Mammary epithelial cell (primary cell): ENCODE measurements at regions of chr14 and their contacts with region 1.

Region 1: GRCh38 chr14:35416108-35416750 is 11.7 kb upstream of the NFKBIA start:
- DNase-seq: no peak
- H3K4me3 ChIP-seq: no peak overlapping the region
- H3K27ac ChIP-seq: no peak overlapping the region
- H3K4me1 ChIP-seq: peaks cover 11% of the 10 kb centered on the region
- H3K27me3 ChIP-seq: no peaks in the 10 kb centered on the region
- CTCF ChIP-seq: no peak

Region 2: DNA sequence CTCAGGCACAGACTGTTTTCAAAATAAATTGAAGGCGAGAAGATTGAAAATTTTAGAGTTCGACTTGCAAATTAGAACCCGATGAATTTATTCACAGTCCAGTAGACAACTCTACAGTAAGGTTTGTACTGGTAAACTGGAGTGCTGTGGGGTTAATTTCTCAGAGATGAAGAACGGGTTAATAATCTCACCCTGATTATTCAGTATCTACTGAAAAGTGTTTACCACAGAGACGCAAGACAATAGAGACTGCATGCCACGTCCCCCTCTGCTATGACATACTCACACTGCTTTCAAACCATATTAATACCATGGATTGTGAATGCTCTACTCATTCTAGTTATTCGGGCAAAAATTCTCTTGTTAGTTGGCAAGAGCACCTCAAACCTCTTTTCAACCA is 737.9 kb before region 1 on chr14:
- CTCF ChIA-PET with region 1: no interaction called
- dilution Hi-C with region 1: no loop called
- in situ Hi-C with region 1: loop called in 1 of 2 experiments (anchors 25 kb)
- intact Hi-C with region 1: loop called (anchors 2 kb)
- DNase-seq: peak; percentile 42
- H3K4me3 ChIP-seq: no peak overlapping the region
- H3K27ac ChIP-seq: peak overlapping the region; percentile 80
- H3K4me1 ChIP-seq: peaks cover 14% of the 10 kb centered on the region
- H3K27me3 ChIP-seq: no peaks in the 10 kb centered on the region
- CTCF ChIP-seq: no peak

Region 3: DNA sequence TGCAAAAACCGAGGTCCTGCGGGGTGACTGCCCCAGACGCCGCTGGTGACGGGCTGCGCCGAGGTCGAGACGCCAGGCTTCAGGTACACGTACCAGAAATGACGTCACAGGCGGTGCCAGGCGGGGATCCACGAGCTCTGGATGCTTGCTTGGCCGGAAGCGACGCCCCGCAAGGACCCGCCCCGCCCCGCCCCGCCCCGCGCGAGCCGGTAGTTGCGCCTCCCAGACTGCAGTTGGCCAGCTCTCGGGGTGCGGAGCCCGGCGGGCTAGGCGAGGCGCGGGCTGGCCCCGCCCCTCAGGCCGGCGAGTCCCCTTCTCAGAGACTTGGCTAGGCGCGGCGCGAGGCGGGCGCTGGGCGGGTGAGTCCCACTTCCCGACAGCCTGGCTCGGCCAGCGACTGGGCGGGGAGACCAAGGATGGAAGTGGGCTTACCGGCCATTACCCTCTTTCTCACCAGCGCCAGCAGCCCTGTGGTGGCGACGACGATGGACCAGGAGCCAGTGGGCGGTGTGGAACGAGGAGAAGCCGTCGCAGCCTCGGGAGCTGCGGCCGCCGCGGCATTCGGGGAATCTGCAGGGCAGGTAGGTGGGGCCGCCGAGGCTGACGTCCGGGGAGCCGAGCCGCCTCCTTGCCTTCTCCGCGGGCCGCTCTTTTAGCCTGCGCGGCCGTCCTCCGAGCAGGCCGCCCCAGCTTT is 370.0 kb before region 1 on chr14 and contains the start of gene FAM177A1:
- CTCF ChIA-PET with region 1: no interaction called
- dilution Hi-C with region 1: no loop called
- in situ Hi-C with region 1: no loop called
- intact Hi-C with region 1: loop called (anchors 5 kb)
- DNase-seq: peak; percentile 98
- H3K4me3 ChIP-seq: peak within 1 kb of the TSS; percentile 88 to 98 (median 91)
- H3K27ac ChIP-seq: peak within 1 kb of the TSS; percentile 97
- H3K4me1 ChIP-seq: peaks cover 11% of the 10 kb centered on the region
- H3K27me3 ChIP-seq: no peaks in the 10 kb centered on the region
- CTCF ChIP-seq: no peak
- total RNA-seq, gene FAM177A1: 30.2 to 84.2 TPM

Region 4: GRCh38 chr14:35121887-35122695 is 294.1 kb before region 1 on chr14 and contains the starts of genes PPP2R3C and PRORP:
- CTCF ChIA-PET with region 1: no interaction called
- dilution Hi-C with region 1: no loop called
- in situ Hi-C with region 1: loop called in 1 of 2 experiments (anchors 10 kb)
- intact Hi-C with region 1: no loop called
- DNase-seq: peak; percentile 99
- H3K4me3 ChIP-seq: peak within 1 kb of the TSS; percentile 54 to 67 (median 61)
- H3K27ac ChIP-seq: peak within 1 kb of the TSS; percentile 99
- H3K4me1 ChIP-seq: peaks cover 11% of the 10 kb centered on the region
- H3K27me3 ChIP-seq: no peaks in the 10 kb centered on the region
- CTCF ChIP-seq: no peak
- total RNA-seq, gene PPP2R3C: 12.2 to 18.7 TPM
- total RNA-seq, gene PRORP: 33.5 to 53.2 TPM

Region 5: DNA sequence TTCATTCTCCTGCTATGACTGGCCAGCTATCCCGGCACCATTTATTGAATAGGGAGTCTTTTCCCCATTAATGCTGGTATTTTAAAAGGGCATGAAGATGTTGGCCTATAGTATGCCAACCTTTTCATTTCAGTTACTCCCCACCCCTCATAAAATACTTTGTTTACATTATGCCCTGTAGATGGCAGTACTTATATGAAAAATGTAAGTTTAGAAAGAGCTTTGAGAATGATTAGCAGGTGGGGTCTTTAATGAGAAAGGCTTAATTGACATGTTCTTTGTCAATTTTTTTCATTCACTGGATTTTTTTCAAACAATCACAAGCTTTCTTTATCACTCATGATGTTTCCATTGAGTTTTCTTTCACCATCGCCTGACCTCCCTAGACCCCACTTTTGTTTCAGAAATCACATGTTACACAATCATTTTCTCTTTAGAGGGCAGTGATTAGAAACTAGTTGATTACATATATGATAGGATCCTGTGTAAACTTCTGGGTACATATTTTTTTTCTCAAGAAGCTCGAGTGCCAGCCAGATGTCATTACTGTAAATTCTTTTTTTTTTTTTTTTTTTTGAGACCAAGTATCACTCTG is 186.6 kb before region 1 on chr14:
- CTCF ChIA-PET with region 1: no interaction called
- dilution Hi-C with region 1: no loop called
- in situ Hi-C with region 1: no loop called
- intact Hi-C with region 1: loop called (anchors 1 kb)
- DNase-seq: no peak
- H3K4me3 ChIP-seq: no peak overlapping the region
- H3K27ac ChIP-seq: no peak overlapping the region
- H3K4me1 ChIP-seq: peaks cover 5% of the 10 kb centered on the region
- H3K27me3 ChIP-seq: no peaks in the 10 kb centered on the region
- CTCF ChIP-seq: peak; percentile 12 to 34

Region 6: DNA sequence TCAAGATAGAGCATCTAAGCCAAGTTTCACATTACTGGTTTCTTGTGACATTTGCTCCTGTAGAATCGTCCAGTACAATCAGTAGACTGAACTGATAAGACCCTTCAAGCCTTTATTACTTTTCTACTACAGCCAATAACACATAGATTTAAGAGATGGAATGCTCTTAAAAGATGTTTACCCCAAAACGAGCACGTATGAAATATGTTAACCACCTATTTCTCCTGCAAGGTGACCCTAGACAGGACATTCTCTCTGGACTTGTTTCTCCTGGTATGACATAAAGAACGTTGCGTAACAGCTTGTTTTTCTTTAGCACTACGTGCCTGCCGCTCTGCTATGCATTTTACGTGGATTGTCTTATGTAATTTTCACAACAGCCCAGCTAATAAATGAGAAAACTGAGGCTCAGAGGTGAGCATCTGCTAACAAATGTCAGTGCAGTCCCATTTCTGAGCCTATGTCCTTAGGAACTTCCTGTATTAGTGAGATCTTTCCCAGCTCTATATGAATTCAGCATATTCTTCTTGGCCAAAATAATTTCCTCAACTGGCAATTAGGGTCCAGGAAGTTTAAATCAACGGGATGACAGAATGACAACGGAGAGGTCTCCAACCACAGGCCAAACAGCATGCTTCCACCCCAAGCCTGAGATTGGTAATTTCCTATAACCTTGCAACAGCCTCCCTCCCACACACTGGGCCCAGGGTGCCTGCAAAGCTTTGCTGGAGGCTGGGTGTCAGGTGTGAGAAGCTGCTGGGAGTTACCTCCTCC is 15.4 kb before region 1 on chr14:
- CTCF ChIA-PET with region 1: no interaction called
- dilution Hi-C with region 1: no loop called
- in situ Hi-C with region 1: no loop called
- intact Hi-C with region 1: no loop called
- DNase-seq: peak; percentile 68
- H3K4me3 ChIP-seq: peak overlapping the region in 1 of 3 experiments; percentile 61
- H3K27ac ChIP-seq: no peak overlapping the region
- H3K4me1 ChIP-seq: peaks cover 33% of the 10 kb centered on the region
- H3K27me3 ChIP-seq: no peaks in the 10 kb centered on the region
- CTCF ChIP-seq: no peak

Region 7: GRCh38 chr14:35503656-35504055 is 87.4 kb after region 1 on chr14:
- CTCF ChIA-PET with region 1: no interaction called
- dilution Hi-C with region 1: no loop called
- in situ Hi-C with region 1: no loop called
- intact Hi-C with region 1: no loop called
- DNase-seq: no peak
- H3K4me3 ChIP-seq: no peak overlapping the region
- H3K27ac ChIP-seq: no peak overlapping the region
- H3K4me1 ChIP-seq: no peaks in the 10 kb centered on the region
- H3K27me3 ChIP-seq: peaks cover 8% of the 10 kb centered on the region
- CTCF ChIP-seq: no peak

Region 8: GRCh38 chr14:35594616-35595015 is 178.4 kb after region 1 on chr14:
- CTCF ChIA-PET with region 1: no interaction called
- dilution Hi-C with region 1: no loop called
- in situ Hi-C with region 1: no loop called
- intact Hi-C with region 1: no loop called
- DNase-seq: no peak
- H3K4me3 ChIP-seq: no peak overlapping the region
- H3K27ac ChIP-seq: no peak overlapping the region
- H3K4me1 ChIP-seq: no peaks in the 10 kb centered on the region
- H3K27me3 ChIP-seq: no peaks in the 10 kb centered on the region
- CTCF ChIP-seq: no peak